CD4-positive, alpha-beta memory T cell (primary cell): ENCODE measurements at regions of chrX and their contacts with region 1.

Region 1: DNA sequence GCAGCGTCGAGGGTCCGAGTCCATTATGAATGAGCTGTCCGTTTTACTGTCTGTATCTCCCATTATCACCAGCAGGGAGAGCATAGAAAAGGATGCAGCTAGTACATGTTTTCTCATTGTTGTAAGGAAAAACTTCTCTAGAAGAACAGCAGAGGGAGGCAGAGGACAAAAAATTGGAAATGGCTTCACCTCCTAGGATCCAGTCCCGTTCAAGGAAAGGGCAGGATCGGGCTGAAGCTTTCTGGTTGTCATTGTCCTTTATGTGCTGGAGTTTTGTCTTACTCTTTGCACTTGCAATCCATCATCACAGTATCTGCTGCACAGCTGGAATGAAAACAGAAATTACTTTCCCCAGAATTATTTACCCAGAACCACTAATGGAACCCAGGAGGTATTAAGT is 14.7 kb downstream of the NDP start:
- DNase-seq: peak; percentile 47 to 59 (median 51)
- H3K4me3 ChIP-seq: no peak overlapping the region
- H3K4me3 Mint-ChIP-seq: peak overlapping the region in 1 of 8 donors; percentile 38
- H3K27ac ChIP-seq: no peak overlapping the region
- H3K27ac Mint-ChIP-seq: no peak overlapping the region
- H3K4me1 ChIP-seq: no peaks in the 10 kb centered on the region
- H3K4me1 Mint-ChIP-seq: peaks cover 1 to 6% (median 4%) of the 10 kb centered on the region in 4 donors
- H3K27me3 ChIP-seq: no peaks in the 10 kb centered on the region
- H3K27me3 Mint-ChIP-seq: peaks cover 0 to 4% of the 10 kb centered on the region in 2 donors

Region 2: DNA sequence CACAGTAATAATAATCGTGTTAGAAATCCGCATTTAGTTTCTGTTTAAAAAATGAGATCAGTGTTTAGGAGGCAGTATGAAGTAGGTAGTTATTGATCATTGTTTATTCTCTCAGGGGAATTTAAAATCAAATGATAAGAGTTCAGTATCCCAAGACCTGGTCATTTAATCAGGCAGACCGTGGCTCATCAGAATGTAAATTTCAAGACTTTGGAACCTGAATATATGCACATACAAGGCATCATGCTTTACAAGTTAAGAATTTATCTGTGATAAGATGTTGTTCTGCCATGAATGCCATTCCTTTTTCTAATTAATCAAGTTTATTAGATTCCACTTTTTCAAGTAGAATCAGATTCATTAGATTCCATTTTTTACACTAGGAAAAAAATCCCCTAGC is 435.9 kb before region 1 on chrX:
- CTCF ChIA-PET with region 1: no interaction called
- POLR2A ChIA-PET with region 1: no interaction called
- intact Hi-C with region 1: no loop called
- DNase-seq: no peak
- H3K4me3 ChIP-seq: no peak overlapping the region
- H3K4me3 Mint-ChIP-seq: no peak overlapping the region
- H3K27ac ChIP-seq: no peak overlapping the region
- H3K27ac Mint-ChIP-seq: no peak overlapping the region
- H3K4me1 ChIP-seq: no peaks in the 10 kb centered on the region
- H3K4me1 Mint-ChIP-seq: no peaks in the 10 kb centered on the region
- H3K27me3 ChIP-seq: no peaks in the 10 kb centered on the region
- H3K27me3 Mint-ChIP-seq: peaks cover 1 to 2% of the 10 kb centered on the region in 2 donors

Region 3: GRCh38 chrX:43849173-43849572 is 109.4 kb before region 1 on chrX:
- CTCF ChIA-PET with region 1: no interaction called
- POLR2A ChIA-PET with region 1: no interaction called
- intact Hi-C with region 1: no loop called
- DNase-seq: no peak
- H3K4me3 ChIP-seq: no peak overlapping the region
- H3K4me3 Mint-ChIP-seq: no peak overlapping the region
- H3K27ac ChIP-seq: no peak overlapping the region
- H3K27ac Mint-ChIP-seq: no peak overlapping the region
- H3K4me1 ChIP-seq: no peaks in the 10 kb centered on the region
- H3K4me1 Mint-ChIP-seq: no peaks in the 10 kb centered on the region
- H3K27me3 ChIP-seq: no peaks in the 10 kb centered on the region
- H3K27me3 Mint-ChIP-seq: no peaks in the 10 kb centered on the region

Region 4: GRCh38 chrX:43986083-43986482 is 27.6 kb after region 1 on chrX:
- CTCF ChIA-PET with region 1: no interaction called
- POLR2A ChIA-PET with region 1: no interaction called
- intact Hi-C with region 1: no loop called
- DNase-seq: no peak
- H3K4me3 ChIP-seq: no peak overlapping the region
- H3K4me3 Mint-ChIP-seq: no peak overlapping the region
- H3K27ac ChIP-seq: no peak overlapping the region
- H3K27ac Mint-ChIP-seq: no peak overlapping the region
- H3K4me1 ChIP-seq: no peaks in the 10 kb centered on the region
- H3K4me1 Mint-ChIP-seq: no peaks in the 10 kb centered on the region
- H3K27me3 ChIP-seq: no peaks in the 10 kb centered on the region
- H3K27me3 Mint-ChIP-seq: no peaks in the 10 kb centered on the region

Region 5: DNA sequence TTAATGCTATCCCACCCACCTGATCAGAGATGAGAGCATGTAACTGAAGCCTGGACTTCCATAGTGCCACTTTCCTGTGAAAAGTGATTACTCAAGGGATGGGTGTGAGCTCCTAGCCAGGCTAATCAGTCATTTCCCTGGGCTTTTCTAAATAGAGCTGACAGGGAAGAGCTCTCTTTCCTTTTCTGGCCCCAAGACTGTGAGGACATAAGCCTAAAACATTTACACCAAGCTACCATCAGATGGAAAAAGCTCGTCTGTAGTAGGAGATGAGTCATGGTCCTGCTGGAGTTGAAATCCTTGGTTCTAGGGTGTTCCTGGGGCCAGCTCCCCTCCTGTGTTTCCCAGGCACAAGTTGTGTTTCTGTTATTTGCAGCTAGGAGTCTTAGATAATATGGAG is 67.0 kb after region 1 on chrX:
- CTCF ChIA-PET with region 1: interaction called, 14 read pairs
- POLR2A ChIA-PET with region 1: interaction called, 3 read pairs
- intact Hi-C with region 1: no loop called
- DNase-seq: no peak
- H3K4me3 ChIP-seq: no peak overlapping the region
- H3K4me3 Mint-ChIP-seq: no peak overlapping the region
- H3K27ac ChIP-seq: no peak overlapping the region
- H3K27ac Mint-ChIP-seq: no peak overlapping the region
- H3K4me1 ChIP-seq: no peaks in the 10 kb centered on the region
- H3K4me1 Mint-ChIP-seq: peaks cover 0 to 3% (median 2%) of the 10 kb centered on the region in 4 donors
- H3K27me3 ChIP-seq: no peaks in the 10 kb centered on the region
- H3K27me3 Mint-ChIP-seq: no peaks in the 10 kb centered on the region

Region 6: DNA sequence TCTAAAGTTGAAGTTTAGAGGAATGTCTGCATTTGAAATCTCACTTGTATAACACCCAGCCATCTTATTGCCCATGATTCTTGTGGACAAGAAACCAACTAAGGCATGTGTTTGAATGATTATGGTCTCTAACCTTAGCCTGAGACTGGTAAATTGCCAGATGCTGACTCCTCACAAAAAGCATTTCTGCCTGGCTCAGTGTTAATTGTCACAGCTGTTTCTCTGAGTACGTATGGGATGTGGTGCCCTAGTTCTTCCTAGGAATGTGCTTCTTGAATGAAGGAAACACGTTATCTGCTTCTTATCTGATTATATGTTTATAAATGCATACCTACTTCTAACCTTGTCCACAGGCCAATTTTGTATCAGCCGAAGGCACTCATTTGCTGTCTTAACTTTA is 77.8 kb after region 1 on chrX:
- CTCF ChIA-PET with region 1: no interaction called
- POLR2A ChIA-PET with region 1: no interaction called
- intact Hi-C with region 1: no loop called
- DNase-seq: no peak
- H3K4me3 ChIP-seq: no peak overlapping the region
- H3K4me3 Mint-ChIP-seq: no peak overlapping the region
- H3K27ac ChIP-seq: no peak overlapping the region
- H3K27ac Mint-ChIP-seq: no peak overlapping the region
- H3K4me1 ChIP-seq: peaks cover 3% of the 10 kb centered on the region
- H3K4me1 Mint-ChIP-seq: peaks cover 2 to 11% (median 7%) of the 10 kb centered on the region in 4 donors
- H3K27me3 ChIP-seq: no peaks in the 10 kb centered on the region
- H3K27me3 Mint-ChIP-seq: no peaks in the 10 kb centered on the region

Region 7: GRCh38 chrX:44303119-44303518 is 344.6 kb after region 1 on chrX:
- CTCF ChIA-PET with region 1: interaction called, 9 read pairs
- POLR2A ChIA-PET with region 1: no interaction called
- intact Hi-C with region 1: loop called (anchors 1 kb)
- DNase-seq: peak in 1 of 5 donors; percentile 8
- H3K4me3 ChIP-seq: no peak overlapping the region
- H3K4me3 Mint-ChIP-seq: no peak overlapping the region
- H3K27ac ChIP-seq: no peak overlapping the region
- H3K27ac Mint-ChIP-seq: peak overlapping the region in 1 of 7 donors; percentile 19
- H3K4me1 ChIP-seq: no peaks in the 10 kb centered on the region
- H3K4me1 Mint-ChIP-seq: peaks cover 0 to 1% (median 0%) of the 10 kb centered on the region in 4 donors
- H3K27me3 ChIP-seq: no peaks in the 10 kb centered on the region
- H3K27me3 Mint-ChIP-seq: no peaks in the 10 kb centered on the region

Region 8: GRCh38 chrX:44542567-44543325 is 584.2 kb after region 1 on chrX and contains the start of gene FUNDC1:
- CTCF ChIA-PET with region 1: interaction called, 3 read pairs
- POLR2A ChIA-PET with region 1: interaction called, 3 read pairs
- intact Hi-C with region 1: loop called (anchors 1 kb)
- DNase-seq: peak; percentile 90 to 92 (median 91)
- H3K4me3 ChIP-seq: peak within 1 kb of the TSS; percentile 52 to 66
- H3K4me3 Mint-ChIP-seq: peak within 1 kb of the TSS; percentile 90 to 96 (median 96)
- H3K27ac ChIP-seq: peak within 1 kb of the TSS; percentile 73
- H3K27ac Mint-ChIP-seq: peak within 1 kb of the TSS; percentile 82 to 97 (median 96)
- H3K4me1 ChIP-seq: peaks cover 26% of the 10 kb centered on the region
- H3K4me1 Mint-ChIP-seq: peaks cover 11 to 38% (median 33%) of the 10 kb centered on the region in 4 donors
- H3K27me3 ChIP-seq: no peaks in the 10 kb centered on the region
- H3K27me3 Mint-ChIP-seq: no peaks in the 10 kb centered on the region
- total RNA-seq, gene FUNDC1: 7.4 to 8.7 TPM

Region 9: GRCh38 chrX:45070116-45071007 is 1111.8 kb after region 1 on chrX:
- CTCF ChIA-PET with region 1: interaction called, 5 read pairs
- POLR2A ChIA-PET with region 1: no interaction called
- intact Hi-C with region 1: loop called (anchors 2 kb)
- DNase-seq: peak in 4 of 5 donors; percentile 38 to 52 (median 46)
- H3K4me3 ChIP-seq: no peak overlapping the region
- H3K4me3 Mint-ChIP-seq: peak overlapping the region in 3 of 8 donors; percentile 21 to 35 (median 26)
- H3K27ac ChIP-seq: no peak overlapping the region
- H3K27ac Mint-ChIP-seq: peak overlapping the region; percentile 40 to 86 (median 65)
- H3K4me1 ChIP-seq: peaks cover 28% of the 10 kb centered on the region
- H3K4me1 Mint-ChIP-seq: peaks cover 37 to 74% (median 55%) of the 10 kb centered on the region in 4 donors
- H3K27me3 ChIP-seq: no peaks in the 10 kb centered on the region
- H3K27me3 Mint-ChIP-seq: no peaks in the 10 kb centered on the region